ENCODE measurements at regions of chr1 and their contacts with region 1.

Region 1: DNA sequence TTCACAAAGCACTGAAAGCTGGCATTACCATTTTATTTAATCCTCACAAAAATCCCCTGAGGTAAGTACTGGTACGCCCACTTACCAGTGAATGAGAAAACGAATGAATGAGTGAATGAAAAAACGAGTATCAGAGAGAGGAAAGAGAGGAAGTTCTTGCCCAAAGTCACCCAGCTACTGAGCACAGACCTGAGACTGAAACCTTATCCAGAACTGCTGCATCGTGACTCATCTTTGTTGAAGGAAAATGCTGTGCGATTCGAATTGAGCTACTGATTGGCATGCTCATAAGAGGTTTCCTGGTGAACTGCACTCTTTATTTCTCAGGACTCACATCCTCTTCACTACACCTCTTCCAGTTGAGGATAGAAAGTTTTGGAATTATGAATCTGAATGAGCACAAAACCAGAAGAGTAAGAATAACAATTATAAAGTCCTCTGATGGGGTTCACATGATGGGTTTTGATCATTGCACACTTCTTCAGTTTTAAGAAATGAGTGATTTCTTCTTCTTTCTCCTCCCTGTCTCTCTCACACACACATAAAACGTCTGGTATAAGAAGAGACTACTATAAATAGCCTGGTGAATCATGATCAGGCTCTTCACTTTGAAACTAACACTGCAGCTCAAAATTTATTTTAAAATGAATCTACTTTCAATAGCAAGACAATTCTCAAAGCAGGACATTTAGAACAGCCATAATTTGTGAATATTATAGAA is 32.1 kb downstream of the IL12RB2 start:
- DNase-seq: no peak
- ATAC-seq: peak; percentile 51
- H3K4me3 Mint-ChIP-seq: peak overlapping the region; percentile 62
- H3K27ac Mint-ChIP-seq: peak overlapping the region; percentile 77
- H3K4me1 Mint-ChIP-seq: peaks cover 74% of the 10 kb centered on the region
- H3K27me3 Mint-ChIP-seq: no peaks in the 10 kb centered on the region
- CTCF ChIP-seq: no peak

Region 2: GRCh38 chr1:66929999-66930822 is 409.6 kb before region 1 on chr1:
- CTCF ChIA-PET with region 1: no interaction called
- POLR2A ChIA-PET with region 1: no interaction called
- intact Hi-C with region 1: loop called (anchors 2 kb)
- DNase-seq: peak; percentile 98
- ATAC-seq: peak; percentile 78
- H3K4me3 Mint-ChIP-seq: peak overlapping the region; percentile 94
- H3K27ac Mint-ChIP-seq: peak overlapping the region; percentile 93
- H3K4me1 Mint-ChIP-seq: peaks cover 57% of the 10 kb centered on the region
- H3K27me3 Mint-ChIP-seq: no peaks in the 10 kb centered on the region
- CTCF ChIP-seq: no peak

Region 3: GRCh38 chr1:67053785-67054772 is 285.7 kb before region 1 on chr1 and contains the start of gene SLC35D1:
- CTCF ChIA-PET with region 1: no interaction called
- POLR2A ChIA-PET with region 1: no interaction called
- intact Hi-C with region 1: loop called (anchors 5 kb)
- DNase-seq: peak; percentile 82
- ATAC-seq: peak; percentile 85
- H3K4me3 Mint-ChIP-seq: peak within 1 kb of the TSS; percentile 92
- H3K27ac Mint-ChIP-seq: peak within 1 kb of the TSS; percentile 92
- H3K4me1 Mint-ChIP-seq: peaks cover 21% of the 10 kb centered on the region
- H3K27me3 Mint-ChIP-seq: no peaks in the 10 kb centered on the region
- CTCF ChIP-seq: no peak
- total RNA-seq, gene SLC35D1: 10.1 and 11.1 TPM in 2 replicates

Region 4: DNA sequence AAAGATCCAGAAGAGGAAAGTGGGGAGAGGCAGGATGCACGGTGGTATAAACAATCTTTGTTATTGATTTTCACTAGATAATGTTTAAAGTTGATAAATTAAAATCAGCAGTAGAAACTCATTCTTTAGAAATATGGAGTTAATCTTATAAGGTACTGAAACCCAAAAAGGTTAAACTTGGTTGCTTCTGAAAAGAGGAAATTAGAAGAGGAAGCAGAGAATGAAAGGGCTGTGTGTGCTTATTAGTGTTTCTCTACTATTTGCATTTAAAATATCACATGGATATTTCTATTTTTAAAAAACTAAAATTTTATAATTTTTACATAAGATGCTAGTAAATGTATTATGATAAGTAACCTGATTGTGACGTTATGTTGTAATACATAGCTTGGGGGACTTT is 229.4 kb before region 1 on chr1:
- CTCF ChIA-PET with region 1: no interaction called
- POLR2A ChIA-PET with region 1: no interaction called
- intact Hi-C with region 1: loop called (anchors 10 kb)
- DNase-seq: no peak
- ATAC-seq: peak; percentile 60
- H3K4me3 Mint-ChIP-seq: peak overlapping the region; percentile 58
- H3K27ac Mint-ChIP-seq: peak overlapping the region; percentile 76
- H3K4me1 Mint-ChIP-seq: peaks cover 41% of the 10 kb centered on the region
- H3K27me3 Mint-ChIP-seq: no peaks in the 10 kb centered on the region
- CTCF ChIP-seq: no peak

Region 5: DNA sequence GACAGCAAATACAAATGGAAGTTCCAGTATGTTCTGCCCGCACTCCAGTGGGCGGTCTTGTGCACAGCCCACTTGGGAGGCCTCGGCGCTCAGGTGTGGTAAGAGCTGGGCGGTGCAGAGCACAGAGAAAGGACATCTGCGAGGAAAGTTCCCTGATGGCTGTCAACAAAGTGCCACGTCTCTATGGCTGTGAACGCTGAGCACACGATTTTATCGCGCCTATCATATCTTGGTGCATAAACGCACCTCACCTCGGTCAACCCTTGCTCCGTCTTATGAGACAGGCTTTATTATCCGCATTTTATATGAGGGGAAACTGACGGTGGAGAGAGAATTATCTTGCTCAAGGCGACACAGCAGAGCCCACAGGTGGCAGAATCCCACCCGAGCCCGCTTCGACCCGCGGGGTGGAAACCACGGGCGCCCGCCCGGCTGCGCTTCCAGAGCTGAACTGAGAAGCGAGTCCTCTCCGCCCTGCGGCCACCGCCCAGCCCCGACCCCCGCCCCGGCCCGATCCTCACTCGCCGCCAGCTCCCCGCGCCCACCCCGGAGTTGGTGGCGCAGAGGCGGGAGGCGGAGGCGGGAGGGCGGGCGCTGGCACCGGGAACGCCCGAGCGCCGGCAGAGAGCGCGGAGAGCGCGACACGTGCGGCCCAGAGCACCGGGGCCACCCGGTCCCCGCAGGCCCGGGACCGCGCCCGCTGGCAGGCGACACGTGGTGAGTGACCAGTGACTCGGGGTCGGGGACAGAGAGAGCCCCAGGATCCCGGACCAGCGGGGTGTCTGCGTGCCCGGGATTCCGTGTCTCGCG is 32.3 kb before region 1 on chr1 and contains the start of gene IL12RB2:
- CTCF ChIA-PET with region 1: no interaction called
- POLR2A ChIA-PET with region 1: interaction called, 3 read pairs
- intact Hi-C with region 1: loop called (anchors 2 kb)
- DNase-seq: peak; percentile 20
- ATAC-seq: peak; percentile 65
- H3K4me3 Mint-ChIP-seq: peak within 1 kb of the TSS; percentile 79
- H3K27ac Mint-ChIP-seq: no peak within 1 kb of the TSS
- H3K4me1 Mint-ChIP-seq: peaks cover 11% of the 10 kb centered on the region
- H3K27me3 Mint-ChIP-seq: peaks cover 35% of the 10 kb centered on the region
- CTCF ChIP-seq: no peak
- total RNA-seq, gene IL12RB2: 0.98 and 1.1 TPM in 2 replicates

Region 6: GRCh38 chr1:67803380-67804279 is 463.8 kb after region 1 on chr1:
- CTCF ChIA-PET with region 1: no interaction called
- POLR2A ChIA-PET with region 1: no interaction called
- intact Hi-C with region 1: no loop called
- DNase-seq: no peak
- ATAC-seq: no peak
- H3K4me3 Mint-ChIP-seq: no peak overlapping the region
- H3K27ac Mint-ChIP-seq: no peak overlapping the region
- H3K4me1 Mint-ChIP-seq: no peaks in the 10 kb centered on the region
- H3K27me3 Mint-ChIP-seq: peaks cover 27% of the 10 kb centered on the region
- CTCF ChIP-seq: no peak

Measured in activated B cell treated with CpG ODN at 0.5 μM for 24 hours (primary cell).